ENCODE measurements at regions of chr3 and their contacts with region 1.

Region 1: DNA sequence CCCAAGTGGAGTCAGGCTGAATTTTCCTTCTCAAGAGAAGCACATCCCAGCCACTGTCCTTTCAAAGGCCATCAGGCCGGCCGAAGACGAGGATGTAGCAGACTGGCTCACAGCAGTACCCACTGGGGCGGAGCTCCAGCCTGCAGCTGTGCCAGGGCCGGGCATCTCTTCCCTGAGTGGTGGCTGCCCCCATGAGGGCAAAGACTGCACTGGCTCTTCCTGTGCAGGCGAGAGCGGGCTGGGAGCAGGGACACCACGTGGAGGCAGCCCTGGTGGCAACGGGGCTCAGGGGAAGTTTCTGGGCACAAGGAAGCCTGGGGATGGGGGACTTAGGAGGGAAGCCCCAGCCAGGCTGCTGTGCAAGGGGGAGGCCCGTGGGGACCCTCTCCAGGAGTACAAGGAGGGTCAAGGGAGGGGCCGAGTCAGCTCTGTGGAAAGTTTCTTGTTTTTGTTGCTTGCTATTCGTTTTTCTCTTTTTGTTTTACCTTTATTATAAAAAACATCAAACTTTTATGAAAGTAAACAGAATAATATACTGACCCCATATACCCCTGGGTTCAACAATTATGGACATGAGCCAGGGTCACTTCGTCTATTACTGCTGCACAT is 66.1 kb downstream of the RPN1 start:
- DNase-seq: peak; percentile 74
- ATAC-seq: peak; percentile 100
- H3K4me3 ChIP-seq: no peak overlapping the region
- H3K27ac ChIP-seq: peak overlapping the region; percentile 37 to 76; a peak in 5 of 6 replicates
- H3K4me1 ChIP-seq: no peaks in the 10 kb centered on the region
- CTCF ChIP-seq: peak; percentile 62
- EP300 ChIP-seq: no peak
- POLR2A ChIP-seq: no peak
- RAD21 ChIP-seq: peak; percentile 87 to 90

Region 2: GRCh38 chr3:128170805-128171516 is 413.6 kb before region 1 on chr3:
- CTCF ChIA-PET with region 1: interaction called, 11 read pairs
- POLR2A ChIA-PET with region 1: no interaction called
- DNase-seq: peak; percentile 67 to 78
- ATAC-seq: peak; percentile 97 to 99
- H3K4me3 ChIP-seq: no peak overlapping the region
- H3K27ac ChIP-seq: no peak overlapping the region
- H3K4me1 ChIP-seq: no peaks in the 10 kb centered on the region; the same call in 2 of the 3 replicates
- CTCF ChIP-seq: peak; percentile 83
- EP300 ChIP-seq: no peak
- POLR2A ChIP-seq: no peak
- RAD21 ChIP-seq: peak; percentile 80 to 83

Region 3: GRCh38 chr3:128226795-128227395 is 357.6 kb before region 1 on chr3:
- CTCF ChIA-PET with region 1: interaction called, 11 read pairs
- POLR2A ChIA-PET with region 1: no interaction called
- DNase-seq: peak; percentile 29 to 51
- ATAC-seq: peak; percentile 84 to 99
- H3K4me3 ChIP-seq: no peak overlapping the region
- H3K27ac ChIP-seq: no peak overlapping the region
- H3K4me1 ChIP-seq: no peaks in the 10 kb centered on the region
- CTCF ChIP-seq: peak; percentile 51
- EP300 ChIP-seq: no peak
- POLR2A ChIP-seq: no peak
- RAD21 ChIP-seq: peak; percentile 58 to 63

Region 4: DNA sequence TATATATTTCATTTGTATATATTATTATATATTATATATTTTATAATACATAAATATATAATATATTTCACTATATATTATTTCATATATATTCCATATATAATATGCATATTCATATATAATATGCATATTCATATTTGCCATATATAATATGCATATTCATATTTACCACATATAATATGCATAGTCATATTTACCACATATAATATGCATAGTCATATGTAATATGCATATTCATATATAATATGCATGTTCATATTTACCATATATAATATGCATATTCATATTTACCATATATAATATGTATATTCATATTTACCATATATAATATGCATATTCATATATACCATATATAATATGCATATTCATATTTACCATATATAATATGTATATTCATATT is 40.3 kb before region 1 on chr3:
- CTCF ChIA-PET with region 1: no interaction called
- POLR2A ChIA-PET with region 1: no interaction called
- DNase-seq: no peak
- ATAC-seq: no peak
- H3K4me3 ChIP-seq: no peak overlapping the region
- H3K27ac ChIP-seq: no peak overlapping the region
- H3K4me1 ChIP-seq: no peaks in the 10 kb centered on the region
- CTCF ChIP-seq: no peak
- EP300 ChIP-seq: no peak
- POLR2A ChIP-seq: no peak
- RAD21 ChIP-seq: no peak

Region 5: DNA sequence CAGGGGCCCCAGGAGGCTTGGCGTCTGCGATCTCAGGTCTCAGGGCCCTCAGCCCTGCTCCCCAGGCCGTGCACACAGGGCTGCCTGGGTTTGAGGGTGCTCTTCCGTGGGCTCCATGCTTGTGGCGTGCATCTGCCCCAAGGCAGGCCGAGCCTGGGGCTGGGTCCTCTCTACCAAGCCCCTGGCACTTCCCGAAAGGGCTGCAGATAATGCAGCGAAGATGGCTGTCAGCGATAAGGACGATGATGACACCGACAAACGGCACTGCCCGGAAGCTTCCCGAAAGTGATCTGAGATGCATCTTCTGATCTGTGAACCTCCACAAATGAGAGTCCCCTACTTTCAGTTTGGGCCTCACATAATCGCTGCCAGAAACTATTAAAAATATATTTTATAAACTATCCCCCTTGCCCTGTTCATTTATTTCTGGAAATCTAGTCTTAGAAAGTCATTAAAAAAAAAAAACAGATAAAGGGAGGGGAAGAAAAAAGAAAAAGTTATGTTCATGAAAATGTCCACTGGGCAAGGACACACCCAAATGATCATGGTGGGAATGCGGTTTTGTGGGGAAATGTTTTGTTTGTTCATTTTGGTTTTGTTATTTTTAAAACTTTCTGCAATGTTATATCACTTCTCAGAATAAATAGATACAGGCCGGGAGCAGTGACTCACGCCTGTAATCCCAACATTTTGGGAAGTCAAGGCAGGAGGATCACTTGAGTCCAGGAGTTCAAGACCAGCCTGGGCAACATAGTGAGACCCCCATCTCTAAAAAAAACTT is 14.6 kb after region 1 on chr3:
- CTCF ChIA-PET with region 1: interaction called, 11 read pairs
- POLR2A ChIA-PET with region 1: no interaction called
- DNase-seq: no peak
- ATAC-seq: no peak
- H3K4me3 ChIP-seq: no peak overlapping the region
- H3K27ac ChIP-seq: no peak overlapping the region
- H3K4me1 ChIP-seq: no peaks in the 10 kb centered on the region
- CTCF ChIP-seq: no peak
- EP300 ChIP-seq: no peak
- POLR2A ChIP-seq: no peak
- RAD21 ChIP-seq: no peak

Measured in A549 (cell line).